Esophagus muscularis mucosa (tissue), 4 donors: ENCODE measurements at regions of chr11 and their contacts with region 1.

Region 1: GRCh38 chr11:10735481-10736475 is 15.3 kb upstream of the CTR9 start:
- DNase-seq: peak; percentile 99
- H3K4me3 ChIP-seq: peak overlapping the region; percentile 20 to 37 (median 34)
- H3K27ac ChIP-seq: peak overlapping the region; percentile 68 to 83 (median 76)
- H3K4me1 ChIP-seq: peaks cover 6 to 34% (median 31%) of the 10 kb centered on the region in 4 donors
- H3K27me3 ChIP-seq: no peaks in the 10 kb centered on the region
- CTCF ChIP-seq: peak; percentile 97 to 100 (median 99)
- EP300 ChIP-seq: no peak
- POLR2A ChIP-seq: no peak

Region 2: DNA sequence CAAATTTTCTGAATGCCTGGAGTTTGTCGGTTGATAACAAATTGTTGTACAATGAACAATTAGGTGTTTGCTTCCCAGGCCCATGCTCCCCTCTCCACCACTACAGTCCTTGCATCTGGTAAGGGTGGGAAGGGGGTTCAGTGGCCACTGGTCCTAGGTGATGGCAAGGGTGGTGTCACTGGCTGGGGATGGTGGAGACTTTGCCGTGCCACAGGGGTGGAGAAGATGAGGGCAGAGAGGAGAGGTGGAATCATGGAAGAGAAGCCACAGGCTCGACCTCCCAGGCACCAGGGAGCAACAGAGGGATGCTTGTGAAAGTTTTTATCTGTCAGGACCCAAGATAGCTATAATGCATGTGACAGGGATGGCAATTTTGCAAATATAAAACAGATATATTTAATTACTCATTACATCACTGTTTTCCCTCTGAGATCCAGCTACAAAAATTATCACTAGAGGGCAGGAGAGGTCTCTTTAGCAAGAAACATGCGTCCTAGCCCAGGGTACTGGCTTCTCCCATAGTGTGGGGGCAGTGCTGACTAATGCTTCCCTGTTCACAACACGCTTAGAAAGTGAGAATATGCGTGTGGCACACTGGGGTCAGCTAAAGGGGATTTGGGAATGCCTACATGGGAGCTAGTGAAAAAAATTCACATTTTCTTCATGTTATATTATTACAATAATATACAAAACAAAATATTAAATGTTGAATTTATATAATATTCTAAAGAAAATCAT is 329.8 kb before region 1 on chr11:
- intact Hi-C with region 1: loop called (anchors 2 kb)
- DNase-seq: peak; percentile 92
- H3K4me3 ChIP-seq: no peak overlapping the region
- H3K27ac ChIP-seq: no peak overlapping the region
- H3K4me1 ChIP-seq: peaks cover 0 to 22% (median 19%) of the 10 kb centered on the region in 4 donors
- H3K27me3 ChIP-seq: no peaks in the 10 kb centered on the region
- CTCF ChIP-seq: peak; percentile 77 to 90 (median 78)
- EP300 ChIP-seq: no peak
- POLR2A ChIP-seq: no peak

Region 3: DNA sequence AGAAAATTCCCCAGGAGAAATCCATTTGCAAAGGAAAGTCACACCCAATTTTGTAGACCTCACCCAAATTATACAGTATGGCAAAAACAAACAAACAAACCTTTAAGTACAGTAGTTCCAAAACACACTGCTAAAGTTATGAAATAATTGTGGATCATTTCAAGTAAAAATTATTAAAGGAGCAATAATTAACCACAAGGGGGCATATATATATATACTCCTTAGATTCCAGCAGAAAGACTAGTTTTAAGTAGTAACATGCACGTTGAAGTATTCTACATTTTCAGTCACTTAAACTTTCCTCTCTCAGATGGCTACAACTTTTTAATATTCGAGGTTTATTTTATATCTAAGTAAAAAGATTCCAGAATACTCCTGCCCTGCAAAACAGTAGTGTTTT is 221.6 kb before region 1 on chr11:
- intact Hi-C with region 1: loop called (anchors 5 kb)
- DNase-seq: no peak
- H3K4me3 ChIP-seq: no peak overlapping the region
- H3K27ac ChIP-seq: no peak overlapping the region
- H3K4me1 ChIP-seq: peaks cover 0 to 13% (median 8%) of the 10 kb centered on the region in 4 donors
- H3K27me3 ChIP-seq: no peaks in the 10 kb centered on the region
- CTCF ChIP-seq: peak; percentile 41 to 51 (median 43)
- EP300 ChIP-seq: no peak
- POLR2A ChIP-seq: no peak

Region 4: DNA sequence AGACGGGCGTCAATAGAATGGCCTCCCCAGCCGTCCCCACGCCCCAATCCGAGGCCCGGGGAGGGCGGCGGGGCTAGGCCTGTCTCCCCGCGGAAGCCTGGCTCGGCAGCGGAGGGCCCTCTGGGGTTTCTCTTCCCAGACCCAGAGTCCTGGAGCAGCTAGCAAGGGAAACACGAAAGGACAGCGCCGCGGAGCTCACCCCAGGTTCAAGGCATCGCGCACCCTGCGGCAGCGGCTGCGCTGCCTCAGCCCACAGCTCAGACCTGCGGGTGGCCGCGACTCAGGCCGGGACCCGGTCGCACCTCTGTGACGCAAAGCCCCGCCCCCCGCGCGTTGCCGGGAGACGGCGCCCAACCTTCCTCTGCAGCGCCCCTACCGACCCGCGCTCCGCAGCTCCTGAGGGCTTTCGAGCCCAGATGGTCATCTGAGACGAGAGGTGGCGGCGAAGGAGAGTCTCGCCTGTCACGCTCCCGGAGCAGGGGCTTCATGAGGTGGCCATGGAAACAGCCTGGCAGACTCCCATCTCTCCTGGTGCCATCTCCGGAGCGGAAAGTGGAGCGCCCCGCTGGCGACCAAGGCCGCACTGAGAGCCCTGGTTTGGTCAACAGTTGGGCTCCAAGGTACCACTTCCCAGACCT is 194.7 kb before region 1 on chr11 and contains the start of gene RNF141:
- intact Hi-C with region 1: loop called (anchors 5 kb)
- DNase-seq: peak; percentile 98
- H3K4me3 ChIP-seq: peak within 1 kb of the TSS; percentile 72 to 97 (median 78)
- H3K27ac ChIP-seq: peak within 1 kb of the TSS; percentile 87 to 92 (median 89)
- H3K4me1 ChIP-seq: peaks cover 7 to 16% (median 14%) of the 10 kb centered on the region in 4 donors
- H3K27me3 ChIP-seq: no peaks in the 10 kb centered on the region
- CTCF ChIP-seq: peak; percentile 72 to 91 (median 87)
- EP300 ChIP-seq: no peak
- POLR2A ChIP-seq: peak; percentile 79
- total RNA-seq, gene RNF141: 24.1 to 39.3 (median 34.9) TPM

Region 5: GRCh38 chr11:10564696-10565318 is 171.0 kb before region 1 on chr11:
- intact Hi-C with region 1: loop called (anchors 2 kb)
- DNase-seq: no peak
- H3K4me3 ChIP-seq: peak overlapping the region in 2 of 4 donors; percentile 14 to 27
- H3K27ac ChIP-seq: no peak overlapping the region
- H3K4me1 ChIP-seq: peaks cover 0 to 8% (median 6%) of the 10 kb centered on the region in 4 donors
- H3K27me3 ChIP-seq: no peaks in the 10 kb centered on the region
- CTCF ChIP-seq: peak; percentile 50 to 70 (median 60)
- EP300 ChIP-seq: no peak
- POLR2A ChIP-seq: no peak

Region 6: DNA sequence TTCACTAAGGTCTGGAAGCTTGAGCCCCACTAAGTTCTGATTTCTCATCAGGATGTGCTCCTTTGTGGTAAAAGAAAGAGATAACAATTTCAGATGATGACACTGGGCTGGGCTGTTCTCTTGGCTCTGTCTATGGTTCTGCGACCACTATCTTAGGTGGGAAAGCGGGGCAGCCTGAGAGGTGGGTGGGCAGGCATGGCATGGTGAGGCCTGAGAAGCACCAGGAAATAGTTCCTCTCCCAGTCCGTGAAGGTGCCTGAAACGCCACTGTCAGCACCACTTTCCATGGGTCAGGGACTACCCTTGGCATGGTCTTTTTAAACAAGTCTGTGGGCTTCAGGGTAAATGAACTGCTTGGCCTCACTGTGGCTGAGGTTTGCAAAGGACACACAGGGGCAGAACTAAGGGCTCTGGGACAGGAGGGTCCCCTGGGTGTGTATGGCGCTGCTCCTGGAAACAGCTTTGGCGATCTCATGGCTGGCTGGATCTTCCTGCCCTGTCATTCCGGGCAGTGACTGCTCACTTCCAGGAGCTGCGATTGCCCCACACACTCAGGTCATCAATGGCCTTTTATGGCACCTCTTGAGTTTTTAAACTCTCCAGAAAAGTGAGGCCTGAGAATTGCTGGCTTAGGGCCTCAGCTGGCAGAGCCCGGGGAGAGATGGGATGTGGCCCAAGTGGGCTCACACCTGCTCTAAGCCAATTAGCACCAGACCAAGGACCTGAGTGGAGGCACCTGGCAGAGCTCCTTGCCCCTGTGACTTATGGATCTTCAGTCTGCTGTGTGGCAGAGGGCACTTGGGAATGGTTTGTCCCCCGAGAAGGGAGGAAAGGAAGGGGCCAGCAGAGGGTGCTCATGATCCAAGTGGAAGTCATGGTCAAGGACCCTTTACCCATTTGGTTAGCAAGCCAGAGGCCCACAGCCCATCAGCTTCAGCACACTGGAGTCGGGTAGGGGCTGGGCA is 111.7 kb before region 1 on chr11:
- intact Hi-C with region 1: loop called (anchors 1 kb)
- DNase-seq: no peak
- H3K4me3 ChIP-seq: no peak overlapping the region
- H3K27ac ChIP-seq: peak overlapping the region; percentile 80 to 89 (median 86)
- H3K4me1 ChIP-seq: peaks cover 22 to 78% (median 63%) of the 10 kb centered on the region in 4 donors
- H3K27me3 ChIP-seq: no peaks in the 10 kb centered on the region
- CTCF ChIP-seq: peak; percentile 47 to 64 (median 55)
- EP300 ChIP-seq: peak; percentile 80
- POLR2A ChIP-seq: no peak

Region 7: DNA sequence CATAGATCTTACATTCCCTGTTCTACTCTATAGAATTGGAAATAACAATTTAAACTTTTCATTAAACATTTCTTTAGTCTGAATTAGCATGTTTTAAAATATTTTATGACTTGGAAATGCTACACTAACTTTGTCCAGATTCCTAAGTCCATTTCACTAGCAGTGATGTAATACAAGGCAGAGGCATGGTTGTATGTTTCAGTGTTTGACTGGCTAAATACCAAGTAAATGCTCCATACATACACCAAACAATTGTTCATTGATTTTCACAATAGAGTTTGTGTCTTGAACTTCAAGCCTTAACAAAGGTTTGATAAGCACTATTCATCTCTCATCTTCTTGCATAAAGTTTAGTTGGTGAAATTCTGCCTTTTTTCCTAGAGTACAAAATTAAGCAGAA is 108.6 kb after region 1 on chr11:
- intact Hi-C with region 1: no loop called
- DNase-seq: no peak
- H3K4me3 ChIP-seq: no peak overlapping the region
- H3K27ac ChIP-seq: peak overlapping the region in 3 of 4 donors; percentile 8 to 55 (median 37)
- H3K4me1 ChIP-seq: peaks cover 18 to 26% (median 21%) of the 10 kb centered on the region in 4 donors
- H3K27me3 ChIP-seq: no peaks in the 10 kb centered on the region
- CTCF ChIP-seq: no peak
- EP300 ChIP-seq: no peak
- POLR2A ChIP-seq: no peak